Transverse colon (tissue), 4 donors: ENCODE measurements at regions of chr21 and their contacts with region 1.

Region 1: DNA sequence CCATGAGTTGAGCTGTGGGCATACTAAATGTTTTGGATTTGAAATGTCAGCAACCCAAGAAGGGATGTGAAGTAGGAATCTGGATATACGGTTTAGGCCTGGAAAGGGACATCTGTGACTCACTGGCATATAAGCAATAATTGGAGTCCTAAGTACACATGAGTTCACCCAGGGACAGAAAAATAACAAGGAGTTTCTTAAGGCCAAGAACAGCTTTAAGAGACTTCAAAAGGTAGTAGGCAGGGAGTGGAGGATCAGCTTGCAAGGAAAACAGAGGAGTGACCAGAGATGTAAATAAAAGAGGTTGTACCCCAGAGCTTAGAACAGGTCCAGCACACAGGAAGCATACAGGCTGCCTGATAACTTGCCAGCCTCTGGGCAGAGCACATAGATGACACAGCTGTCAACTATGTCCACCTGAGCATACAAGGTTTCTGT is 28.1 kb downstream of the TMEM50B start:
- DNase-seq: no peak
- H3K4me3 ChIP-seq: no peak overlapping the region
- H3K27ac ChIP-seq: peak overlapping the region in 1 of 4 donors; percentile 23
- H3K4me1 ChIP-seq: peaks cover 0 to 12% (median 3%) of the 10 kb centered on the region in 4 donors
- H3K27me3 ChIP-seq: no peaks in the 10 kb centered on the region
- CTCF ChIP-seq: no peak
- EP300 ChIP-seq: no peak
- POLR2A ChIP-seq: no peak

Region 2: DNA sequence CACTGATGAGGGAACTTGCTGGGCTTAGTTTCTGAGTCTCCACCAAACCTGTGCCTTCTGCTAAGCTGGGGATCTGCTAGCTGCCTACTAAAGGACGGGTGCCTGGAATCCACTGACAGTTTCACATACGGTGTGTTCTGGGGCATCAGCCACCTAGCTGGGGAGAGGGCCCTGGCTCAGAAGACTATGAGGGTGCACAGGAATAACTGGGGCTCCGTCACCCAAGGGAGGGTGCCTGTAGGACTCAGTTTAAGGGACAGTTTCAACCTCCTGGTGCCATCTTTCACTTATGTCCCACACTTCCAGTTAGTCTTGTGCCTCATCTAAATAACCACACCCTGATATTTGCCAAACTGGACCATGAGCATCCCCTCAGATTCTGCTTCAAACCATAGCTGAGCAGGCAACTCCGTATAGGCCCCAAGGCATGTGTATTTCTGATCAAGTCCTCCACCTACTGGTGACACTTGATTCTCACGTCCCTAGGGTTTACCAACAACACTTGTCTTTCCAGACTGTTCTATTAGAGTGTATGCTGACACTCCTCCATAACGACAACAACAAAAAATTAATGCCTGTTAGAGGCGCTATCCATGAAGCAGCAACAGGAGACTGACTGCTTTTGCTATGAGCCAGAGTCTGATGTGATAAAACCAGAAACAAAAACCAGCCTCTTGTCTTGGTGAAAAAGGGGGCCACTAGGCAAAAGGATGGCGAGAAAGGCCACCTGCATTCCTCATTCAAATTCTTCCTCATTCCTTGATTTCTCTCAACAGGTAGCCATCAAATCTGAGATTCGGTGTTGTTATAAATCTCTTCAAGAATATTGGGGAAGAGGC is 625.1 kb before region 1 on chr21:
- in situ Hi-C with region 1: loop called in 1 of 4 experiments (anchors 25 kb)
- intact Hi-C with region 1: no loop called
- DNase-seq: peak; percentile 50
- H3K4me3 ChIP-seq: no peak overlapping the region
- H3K27ac ChIP-seq: no peak overlapping the region
- H3K4me1 ChIP-seq: no peaks in the 10 kb centered on the region
- H3K27me3 ChIP-seq: no peaks in the 10 kb centered on the region
- CTCF ChIP-seq: peak; percentile 45 to 69 (median 54)
- EP300 ChIP-seq: no peak
- POLR2A ChIP-seq: no peak